Right cardiac atrium (tissue), 5 donors: ENCODE measurements at regions of chr10 and their contacts with region 1.

Region 1: DNA sequence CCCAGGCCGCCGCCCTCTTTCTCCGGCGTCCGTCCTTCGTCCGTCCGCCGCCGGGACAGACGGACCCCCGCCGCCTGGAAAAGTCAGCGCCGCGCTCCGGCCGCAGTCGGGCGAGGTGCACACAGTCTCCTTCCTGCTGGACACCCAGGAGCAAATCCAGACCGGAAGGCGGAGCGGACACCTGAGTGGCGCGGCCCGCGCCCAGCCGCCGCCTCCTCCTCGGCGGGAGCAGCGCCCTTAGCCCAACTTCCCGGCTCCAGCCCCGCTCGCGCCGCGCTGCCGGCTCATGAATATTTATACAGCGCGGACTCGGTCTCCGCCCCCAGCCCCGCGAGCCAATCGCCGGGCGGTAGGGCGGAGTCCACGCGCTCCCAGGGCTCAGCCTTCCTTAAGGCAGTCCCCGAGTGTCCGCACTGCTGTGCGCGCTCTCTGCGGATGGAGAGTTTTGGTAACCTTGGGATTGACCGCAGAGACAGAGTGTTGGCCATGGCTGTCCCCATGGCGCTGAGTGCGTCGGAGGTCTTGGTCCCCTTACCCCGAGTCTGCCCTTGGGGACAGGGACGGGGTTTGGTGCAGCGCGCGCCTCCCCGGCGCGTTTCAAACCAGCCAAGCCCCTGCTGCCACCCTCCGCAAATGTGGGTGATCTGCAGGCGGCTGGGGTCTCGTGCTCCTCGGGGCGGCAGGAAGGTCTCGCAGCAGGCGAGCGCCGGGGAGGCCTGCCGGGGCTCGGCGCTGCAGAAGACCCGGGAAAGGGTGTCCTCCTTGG is at the start of gene FZD8:
- DNase-seq: peak; percentile 94 to 98 (median 97)
- ATAC-seq: peak; percentile 95 to 96
- H3K4me3 ChIP-seq: peak within 1 kb of the TSS; percentile 73
- H3K27ac ChIP-seq: peak within 1 kb of the TSS; percentile 85
- H3K4me1 ChIP-seq: no peaks in the 10 kb centered on the region
- H3K27me3 ChIP-seq: no peaks in the 10 kb centered on the region
- total RNA-seq, gene FZD8: 13.2 to 21.6 (median 17.4) TPM

Region 2: DNA sequence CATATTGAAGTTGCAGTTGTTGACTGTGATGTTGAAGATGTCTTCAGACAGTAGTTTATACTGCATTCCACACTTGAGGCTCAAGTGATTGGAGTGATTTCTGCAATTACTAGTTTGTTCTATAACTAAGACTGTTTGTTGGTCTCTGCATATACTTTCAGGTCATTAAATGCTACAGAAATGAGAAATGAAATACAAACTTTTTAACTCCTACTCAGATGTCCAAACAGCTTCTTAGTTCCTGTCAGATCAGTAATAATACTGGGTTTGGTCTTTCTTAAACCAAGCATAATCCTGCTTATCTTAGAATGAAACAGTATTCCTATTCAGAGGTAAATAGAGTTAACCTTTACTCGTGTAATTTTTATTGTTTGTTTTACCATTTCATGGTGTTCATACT is 190.0 kb before region 1 on chr10:
- intact Hi-C with region 1: no loop called
- DNase-seq: no peak
- ATAC-seq: no peak
- H3K4me3 ChIP-seq: no peak overlapping the region
- H3K27ac ChIP-seq: no peak overlapping the region
- H3K4me1 ChIP-seq: peaks cover 50% of the 10 kb centered on the region
- H3K27me3 ChIP-seq: no peaks in the 10 kb centered on the region

Region 3: GRCh38 chr10:35462491-35462934 is 179.7 kb before region 1 on chr10:
- intact Hi-C with region 1: no loop called
- DNase-seq: no peak
- ATAC-seq: peak; percentile 40 to 54
- H3K4me3 ChIP-seq: no peak overlapping the region
- H3K27ac ChIP-seq: no peak overlapping the region
- H3K4me1 ChIP-seq: peaks cover 51% of the 10 kb centered on the region
- H3K27me3 ChIP-seq: no peaks in the 10 kb centered on the region

Region 4: DNA sequence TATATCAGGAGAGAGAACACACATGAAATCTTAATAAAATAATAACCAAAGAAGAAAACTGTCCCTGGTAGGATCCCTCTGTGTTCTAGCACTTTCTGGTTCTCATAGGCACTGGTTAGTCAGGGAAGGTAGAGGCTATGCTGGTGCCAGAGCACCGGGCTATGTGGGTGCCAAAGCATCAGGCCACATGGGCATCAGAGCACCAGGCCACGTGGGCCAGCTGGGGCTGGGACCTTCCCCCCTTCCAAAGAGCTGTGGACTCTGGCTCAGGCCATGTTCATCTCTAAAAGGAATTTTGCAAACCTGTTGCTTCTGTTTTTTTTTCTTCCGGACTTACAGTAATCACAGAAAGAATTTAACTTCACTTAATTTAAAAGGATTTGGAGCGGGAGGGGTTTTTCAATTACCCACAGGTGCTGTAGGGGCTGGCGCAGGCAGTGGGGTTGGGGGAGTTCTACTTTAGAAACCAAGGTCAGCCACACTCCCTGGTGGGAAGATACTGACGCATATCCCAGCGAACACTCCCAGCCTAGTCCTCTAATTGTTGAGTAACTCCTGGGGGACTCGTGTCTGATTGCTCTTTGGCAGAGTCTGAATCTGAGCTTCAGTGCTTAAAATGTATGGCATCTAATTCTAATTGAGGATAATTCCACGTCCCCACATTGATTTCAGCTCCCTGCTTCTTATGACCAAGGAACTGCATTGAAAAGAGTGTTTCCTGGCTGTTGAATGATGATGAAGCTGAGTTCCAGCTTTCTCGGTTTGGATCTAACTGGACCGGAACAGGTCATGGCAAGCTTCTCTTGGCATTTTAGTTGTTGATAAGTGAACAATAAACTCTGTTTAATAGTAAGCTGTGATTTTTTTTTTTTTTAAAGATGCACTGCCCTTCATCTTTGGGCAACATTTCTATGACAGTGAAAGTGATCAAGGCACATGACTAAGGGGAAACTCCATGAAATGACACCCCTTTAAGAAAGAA is 110.5 kb after region 1 on chr10:
- intact Hi-C with region 1: loop called in 1 of 4 experiments (anchors 10 kb)
- DNase-seq: peak; percentile 59 to 74 (median 61)
- ATAC-seq: peak; percentile 92
- H3K4me3 ChIP-seq: no peak overlapping the region
- H3K27ac ChIP-seq: no peak overlapping the region
- H3K4me1 ChIP-seq: no peaks in the 10 kb centered on the region
- H3K27me3 ChIP-seq: no peaks in the 10 kb centered on the region

Region 5: DNA sequence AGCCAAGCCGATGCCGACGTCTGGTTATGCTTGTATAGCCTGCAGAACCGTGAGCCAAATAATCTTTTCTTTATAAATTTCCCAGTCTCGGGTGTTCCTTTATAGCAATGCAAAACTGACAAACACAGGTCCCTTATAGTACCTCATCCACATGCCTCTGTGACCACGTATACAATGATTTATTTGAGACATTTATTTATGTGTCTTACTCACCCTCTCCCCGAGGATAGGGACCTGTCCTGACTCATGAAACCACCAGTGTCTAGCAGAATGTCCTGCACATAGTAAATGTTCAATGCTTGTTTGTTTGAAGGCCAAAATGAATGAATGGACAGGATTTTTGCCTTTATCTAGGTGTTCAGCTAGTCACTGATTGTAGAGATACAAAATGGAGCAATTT is 147.8 kb after region 1 on chr10:
- intact Hi-C with region 1: loop called in 1 of 4 experiments (anchors 5 kb)
- DNase-seq: no peak
- ATAC-seq: no peak
- H3K4me3 ChIP-seq: no peak overlapping the region
- H3K27ac ChIP-seq: no peak overlapping the region
- H3K4me1 ChIP-seq: peaks cover 2% of the 10 kb centered on the region
- H3K27me3 ChIP-seq: no peaks in the 10 kb centered on the region

Region 6: GRCh38 chr10:35924759-35925158 is 282.5 kb after region 1 on chr10:
- intact Hi-C with region 1: loop called in 2 of 4 experiments (anchors 5 kb)
- DNase-seq: no peak
- ATAC-seq: no peak
- H3K4me3 ChIP-seq: no peak overlapping the region
- H3K27ac ChIP-seq: no peak overlapping the region
- H3K4me1 ChIP-seq: no peaks in the 10 kb centered on the region
- H3K27me3 ChIP-seq: no peaks in the 10 kb centered on the region